Sciatic nerve (tissue), 2 donors: ENCODE measurements at regions of chr20 and their contacts with region 1.

Region 1: GRCh38 chr20:9852566-9852965 is 13.7 kb upstream of the PAK5 start:
- DNase-seq: no peak
- ATAC-seq: no peak

Region 2: DNA sequence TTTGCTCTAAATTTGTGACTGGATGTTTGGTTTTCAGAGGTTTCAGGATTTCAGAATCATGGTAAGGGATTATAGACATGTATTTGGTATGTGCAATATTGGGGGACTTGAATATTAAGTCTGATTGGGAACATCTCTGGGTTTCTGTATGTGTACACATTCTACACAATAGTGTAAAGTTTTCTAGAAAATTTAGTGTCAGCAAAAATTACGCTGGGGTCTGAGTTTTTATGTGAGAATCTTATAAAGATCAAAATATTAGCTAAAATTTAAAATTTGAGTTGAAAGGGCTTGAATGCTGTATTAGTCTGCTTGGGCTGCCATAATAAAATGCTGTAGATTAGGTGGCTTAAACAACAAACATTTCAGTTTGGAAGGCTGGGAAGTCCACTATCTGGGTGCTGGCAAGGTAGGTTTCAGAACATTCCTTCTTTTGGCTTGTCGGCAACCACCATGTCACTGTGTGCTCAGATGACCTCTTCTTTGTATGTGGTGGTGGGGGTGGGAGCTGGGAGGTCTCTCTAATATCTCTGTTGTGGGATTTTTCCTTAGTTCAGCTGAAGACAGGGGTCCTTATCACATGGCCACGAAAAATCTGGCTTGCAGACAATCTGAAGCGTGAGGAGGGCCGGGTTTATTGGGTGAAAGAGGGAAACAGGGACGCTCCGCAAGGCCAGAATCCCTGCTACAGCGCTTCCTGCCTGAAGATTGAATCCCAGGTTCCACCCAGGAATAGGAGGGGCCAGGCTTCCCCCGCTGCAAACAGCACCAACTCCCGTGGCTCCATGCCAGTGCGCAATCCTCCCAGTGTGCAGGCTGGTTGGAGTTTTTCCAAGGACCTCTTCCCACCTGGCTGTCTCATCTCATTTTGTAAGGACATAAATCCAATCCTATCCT is 1420.8 kb before region 1 on chr20:
- intact Hi-C with region 1: no loop called
- DNase-seq: peak; percentile 73
- ATAC-seq: peak; percentile 59

Region 3: GRCh38 chr20:9668381-9668780 is 184.2 kb before region 1 on chr20:
- intact Hi-C with region 1: no loop called
- DNase-seq: no peak
- ATAC-seq: no peak

Region 4: GRCh38 chr20:9884061-9884460 is 31.5 kb after region 1 on chr20:
- intact Hi-C with region 1: loop called (anchors 1 kb)
- DNase-seq: no peak
- ATAC-seq: no peak